HEK293T (cell line): ENCODE measurements at regions of chr1 and their contacts with region 1.

Region 1: DNA sequence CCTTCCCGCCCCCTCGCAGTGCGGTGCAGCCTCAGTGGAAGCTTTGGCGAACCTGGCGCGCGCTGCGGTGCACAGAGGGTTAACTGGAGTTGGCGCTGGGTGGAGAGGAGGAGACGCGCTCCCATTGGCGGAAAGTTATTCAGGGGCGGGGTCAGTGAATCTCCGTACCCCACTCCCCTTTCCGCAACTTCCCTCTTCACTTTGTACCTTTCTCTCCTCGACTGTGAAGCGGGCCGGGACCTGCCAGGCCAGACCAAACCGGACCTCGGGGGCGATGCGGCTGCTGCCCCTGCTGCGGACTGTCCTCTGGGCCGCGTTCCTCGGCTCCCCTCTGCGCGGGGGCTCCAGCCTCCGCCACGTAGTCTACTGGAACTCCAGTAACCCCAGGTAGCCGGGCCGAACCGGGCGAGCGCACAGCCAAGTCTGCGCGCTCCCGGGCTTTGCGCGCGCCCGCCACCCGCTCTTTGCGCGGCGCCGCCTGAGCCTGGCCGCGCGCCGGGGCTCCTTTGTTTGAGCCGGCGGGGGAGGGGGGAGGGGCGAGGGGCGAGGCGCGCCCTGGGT is at the start of gene EFNA4:
- DNase-seq: peak; percentile 90

Region 2: GRCh38 chr1:155006601-155007101 is 57.0 kb before region 1 on chr1:
- CTCF ChIA-PET with region 1: no interaction called
- POLR2A ChIA-PET with region 1: no interaction called
- DNase-seq: peak; percentile 59

Region 3: GRCh38 chr1:155044812-155045690 is 18.6 kb before region 1 on chr1:
- CTCF ChIA-PET with region 1: interaction called, 33 read pairs
- POLR2A ChIA-PET with region 1: interaction called, 11 read pairs
- DNase-seq: peak; percentile 82

Region 4: GRCh38 chr1:155050560-155051341 is 12.9 kb before region 1 on chr1 and contains the start of gene ADAM15:
- CTCF ChIA-PET with region 1: interaction called, 33 read pairs
- POLR2A ChIA-PET with region 1: interaction called, 11 read pairs
- DNase-seq: peak; percentile 98